Adrenal gland (tissue), 19 donors: ENCODE measurements at regions of chr17 and their contacts with region 1.

Region 1: DNA sequence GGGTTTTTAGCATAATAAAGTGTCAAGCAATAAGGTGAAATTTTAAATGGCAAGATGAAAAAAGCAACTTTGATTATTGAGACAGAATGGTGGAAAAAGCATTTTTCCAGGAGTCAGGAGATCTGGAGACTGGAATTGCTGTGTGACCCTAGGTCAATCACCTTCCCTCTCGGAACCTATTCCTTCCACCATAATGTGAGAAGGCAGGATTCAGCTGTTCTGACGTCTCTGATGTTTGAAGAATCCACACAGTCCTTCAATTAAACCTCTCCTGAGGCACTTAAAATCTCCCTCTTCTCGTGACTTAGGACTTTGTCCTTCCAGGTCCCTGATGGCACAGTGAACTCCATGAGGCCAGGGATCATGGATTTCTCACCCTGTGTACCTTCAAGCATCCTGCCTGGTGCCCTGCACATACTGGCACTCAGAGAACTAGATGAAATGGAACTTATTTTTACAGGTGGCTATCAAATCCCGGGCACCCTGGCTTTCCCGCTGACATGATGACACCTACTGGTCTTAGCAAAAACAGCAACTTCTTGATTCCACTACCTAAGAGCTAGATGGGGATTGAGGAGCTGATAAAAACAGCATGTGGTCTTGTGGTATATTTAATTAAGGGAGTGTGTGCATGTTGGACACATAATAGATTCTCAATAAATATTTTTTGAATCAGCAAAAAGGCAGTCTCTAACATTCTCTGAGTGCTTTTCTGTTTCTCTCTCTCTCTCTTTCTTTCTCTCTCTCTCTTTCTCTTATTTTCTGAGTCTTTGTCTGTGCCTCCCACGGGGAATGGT is 2.3 kb upstream of the CCDC182 start:
- DNase-seq: peak; percentile 39 to 80 (median 60)
- H3K4me3 ChIP-seq: no peak overlapping the region
- H3K27ac ChIP-seq: no peak overlapping the region
- H3K4me1 ChIP-seq: peaks cover 0 to 14% of the 10 kb centered on the region in 2 donors
- H3K27me3 ChIP-seq: no peaks in the 10 kb centered on the region
- CTCF ChIP-seq: peak; percentile 49 to 80 (median 74)
- POLR2A ChIP-seq: no peak

Region 2: DNA sequence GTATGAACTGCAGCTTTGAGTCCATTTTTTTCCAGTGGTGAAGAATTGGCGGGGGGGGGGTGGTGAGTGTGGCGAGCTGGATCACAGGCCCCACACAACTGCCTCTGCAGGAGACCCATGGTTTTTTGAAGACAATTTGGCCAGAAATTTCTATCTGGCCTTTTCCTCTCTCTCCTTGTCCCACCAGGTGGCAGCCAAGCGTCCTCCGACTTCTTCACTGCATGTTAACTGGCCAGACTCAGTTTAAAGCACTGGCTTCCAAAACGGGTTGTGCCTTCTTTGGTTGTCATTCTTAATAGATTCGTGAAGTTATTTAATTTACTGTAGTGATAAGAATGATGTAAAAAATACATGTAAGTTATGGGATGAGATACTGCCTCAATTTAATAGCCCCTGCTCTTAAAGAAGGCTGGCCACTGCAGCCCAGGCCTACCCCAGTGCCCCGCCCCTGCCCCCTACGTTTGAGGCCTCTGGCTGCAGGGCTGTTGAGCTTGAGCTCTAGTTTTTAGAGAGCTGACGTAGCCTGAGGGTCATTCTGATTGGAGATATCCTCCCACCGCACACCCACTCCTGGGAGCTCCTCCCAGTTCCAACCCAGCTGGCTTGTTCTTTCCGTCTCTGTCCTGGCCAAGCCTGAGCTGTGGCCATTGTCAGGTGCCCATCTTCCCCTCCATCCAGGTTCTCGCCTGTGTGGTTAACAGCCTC is 625.9 kb before region 1 on chr17:
- intact Hi-C with region 1: loop called in 1 of 2 experiments (anchors 5 kb)
- DNase-seq: peak; percentile 50 to 83 (median 73)
- H3K4me3 ChIP-seq: no peak overlapping the region
- H3K27ac ChIP-seq: peak overlapping the region in 1 of 5 donors; percentile 12
- H3K4me1 ChIP-seq: peaks cover 6 to 15% of the 10 kb centered on the region in 2 donors
- H3K27me3 ChIP-seq: no peaks in the 10 kb centered on the region
- CTCF ChIP-seq: peak; percentile 32 to 56 (median 50)
- POLR2A ChIP-seq: no peak

Region 3: DNA sequence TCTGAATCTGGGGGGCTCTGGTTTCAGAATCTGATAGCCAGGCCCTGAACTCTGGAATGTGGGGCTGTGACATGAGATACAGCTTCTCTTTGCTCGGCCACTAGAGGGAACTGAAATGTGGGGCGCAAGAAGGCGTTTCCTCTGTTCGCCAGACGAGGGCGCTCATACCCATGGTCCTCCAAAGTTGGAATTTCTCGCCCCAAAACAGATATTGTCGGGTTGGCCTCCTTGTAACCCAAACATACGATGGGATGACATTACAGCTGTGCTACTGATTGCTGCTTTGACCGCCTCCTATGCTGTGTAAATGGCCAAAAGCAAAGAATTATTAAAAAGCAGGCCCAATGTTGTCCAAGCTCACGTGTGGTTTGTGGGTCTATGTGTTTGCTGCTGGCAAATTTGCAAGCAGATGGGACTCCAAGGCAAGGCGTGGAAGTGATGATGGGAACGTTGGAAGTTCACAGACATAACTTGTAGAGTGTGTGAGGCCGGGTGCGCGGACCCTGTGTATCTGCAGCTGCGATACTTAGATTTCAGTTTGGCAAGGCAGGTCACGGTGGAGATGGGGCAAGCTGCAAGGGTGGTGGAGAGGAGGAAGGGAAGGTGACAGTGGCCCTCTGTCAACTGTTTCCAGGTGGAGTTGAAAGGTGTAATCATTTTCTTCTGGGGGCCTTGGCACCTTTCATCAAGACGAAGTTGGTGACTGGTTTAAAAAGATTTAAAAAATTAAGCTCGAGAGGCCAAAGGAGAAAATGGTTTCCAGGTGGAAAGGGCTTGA is 504.1 kb before region 1 on chr17:
- intact Hi-C with region 1: loop called (anchors 10 kb)
- DNase-seq: peak; percentile 56 to 87 (median 77)
- H3K4me3 ChIP-seq: no peak overlapping the region
- H3K27ac ChIP-seq: no peak overlapping the region
- H3K4me1 ChIP-seq: no peaks in the 10 kb centered on the region
- H3K27me3 ChIP-seq: no peaks in the 10 kb centered on the region
- CTCF ChIP-seq: peak; percentile 98 to 100 (median 99)
- POLR2A ChIP-seq: no peak

Region 4: DNA sequence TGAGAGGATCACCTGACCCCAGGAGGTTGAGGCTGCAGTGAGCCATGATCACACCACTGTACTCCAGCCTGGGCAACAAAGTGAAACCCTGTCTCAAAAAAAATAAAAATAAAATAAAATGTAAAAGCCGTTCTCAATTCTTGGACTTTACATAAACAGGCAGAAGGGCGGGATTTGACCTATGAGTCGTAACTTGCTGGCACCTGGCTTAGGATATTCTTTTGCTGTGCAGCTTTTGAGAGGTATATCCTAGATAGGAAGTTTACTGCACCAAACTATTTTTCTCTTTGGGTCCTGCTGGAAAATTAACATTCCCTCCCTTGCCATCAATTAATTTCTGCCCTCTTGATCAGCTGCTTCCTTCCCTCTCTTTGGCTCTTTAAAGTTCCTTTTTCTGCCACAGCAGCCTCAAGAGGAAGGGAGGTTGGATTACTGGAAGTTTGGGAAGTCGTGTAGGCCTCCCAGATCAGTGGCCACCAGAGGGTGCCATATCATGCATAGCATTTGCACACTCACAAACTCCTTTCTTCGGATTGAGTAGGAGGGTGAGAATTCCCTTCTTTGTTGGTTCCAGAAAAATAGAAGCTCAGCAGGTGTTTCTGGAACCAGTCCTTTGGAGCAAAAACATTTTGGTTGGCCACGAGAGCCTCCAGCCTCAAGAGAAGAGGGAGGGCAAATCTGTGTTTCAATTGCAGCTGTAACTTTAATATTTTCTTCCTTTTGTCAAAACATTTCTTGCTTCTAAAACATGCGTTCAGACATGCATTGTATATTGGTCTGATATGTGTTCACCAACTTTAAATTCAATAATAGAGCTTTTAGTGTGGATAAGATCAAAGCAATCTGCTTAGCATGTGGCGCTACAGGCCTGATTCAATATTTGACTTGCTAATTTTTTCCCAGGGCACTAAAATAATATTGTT is 149.6 kb before region 1 on chr17:
- intact Hi-C with region 1: loop called in 1 of 2 experiments (anchors 10 kb)
- DNase-seq: peak; percentile 61 to 88 (median 78)
- H3K4me3 ChIP-seq: no peak overlapping the region
- H3K27ac ChIP-seq: peak overlapping the region in 3 of 5 donors; percentile 33 to 54 (median 37)
- H3K4me1 ChIP-seq: peaks cover 6 to 21% of the 10 kb centered on the region in 2 donors
- H3K27me3 ChIP-seq: no peaks in the 10 kb centered on the region
- CTCF ChIP-seq: peak; percentile 73 to 89 (median 78)
- POLR2A ChIP-seq: no peak